Tibial artery (tissue), 4 donors: ENCODE measurements at regions of chr7 and their contacts with region 1.

Region 1: DNA sequence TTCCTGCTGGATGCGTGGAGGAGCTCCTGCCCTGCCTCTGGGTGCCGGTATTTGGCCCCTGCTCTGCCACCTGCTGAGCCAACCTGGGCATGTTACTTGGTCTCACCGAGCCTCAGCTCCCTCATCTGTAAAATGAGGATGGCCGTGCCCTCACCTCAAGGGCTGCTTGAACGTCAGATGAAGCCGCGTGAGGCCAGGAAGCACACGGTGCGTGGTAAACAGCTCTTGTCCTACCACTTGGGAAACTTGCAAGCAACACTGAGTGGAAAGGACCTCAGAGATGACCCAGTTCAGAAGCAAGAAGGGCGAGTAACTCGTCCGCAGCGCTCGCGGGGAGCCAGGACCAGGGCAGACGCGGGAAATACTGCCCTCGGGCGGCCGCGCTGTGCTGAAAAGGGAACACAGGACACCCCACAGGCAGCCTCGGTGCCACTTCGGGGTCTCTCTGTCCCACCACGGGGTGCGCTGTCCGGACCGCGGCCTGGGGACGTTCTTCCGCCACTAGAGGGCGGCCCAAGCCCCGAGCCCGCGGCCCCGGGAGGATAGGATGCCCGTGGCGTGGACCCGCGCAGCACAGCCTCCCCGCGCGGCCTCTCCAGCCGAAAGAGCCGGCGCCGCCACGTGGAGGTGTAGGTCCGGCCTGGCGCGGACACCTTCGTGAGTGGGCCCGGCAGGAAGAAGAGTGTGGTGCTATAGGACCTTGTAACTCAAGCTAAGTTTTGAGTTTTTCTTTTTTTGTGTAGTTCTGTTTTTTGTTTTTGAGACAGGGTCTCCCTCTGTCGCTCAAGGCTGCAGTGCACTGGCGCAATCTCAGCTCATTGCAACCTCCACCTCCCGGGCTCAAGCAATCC is 94.1 kb downstream of the PRKAG2 start:
- DNase-seq: peak; percentile 75 to 79
- H3K4me3 ChIP-seq: peak overlapping the region; percentile 19 to 42
- H3K27ac ChIP-seq: no peak overlapping the region
- H3K4me1 ChIP-seq: peaks cover 0 to 12% (median 6%) of the 10 kb centered on the region in 4 donors
- H3K27me3 ChIP-seq: no peaks in the 10 kb centered on the region
- CTCF ChIP-seq: peak; percentile 77 to 89

Region 2: GRCh38 chr7:151876899-151877777 is 94.3 kb after region 1 on chr7 and contains the start of gene PRKAG2:
- intact Hi-C with region 1: loop called (anchors 10 kb)
- DNase-seq: peak; percentile 80 to 86
- H3K4me3 ChIP-seq: peak within 1 kb of the TSS; percentile 79 to 88
- H3K27ac ChIP-seq: peak within 1 kb of the TSS; percentile 87 to 94
- H3K4me1 ChIP-seq: peaks cover 0 to 25% (median 18%) of the 10 kb centered on the region in 4 donors
- H3K27me3 ChIP-seq: no peaks in the 10 kb centered on the region
- CTCF ChIP-seq: no peak

Region 3: DNA sequence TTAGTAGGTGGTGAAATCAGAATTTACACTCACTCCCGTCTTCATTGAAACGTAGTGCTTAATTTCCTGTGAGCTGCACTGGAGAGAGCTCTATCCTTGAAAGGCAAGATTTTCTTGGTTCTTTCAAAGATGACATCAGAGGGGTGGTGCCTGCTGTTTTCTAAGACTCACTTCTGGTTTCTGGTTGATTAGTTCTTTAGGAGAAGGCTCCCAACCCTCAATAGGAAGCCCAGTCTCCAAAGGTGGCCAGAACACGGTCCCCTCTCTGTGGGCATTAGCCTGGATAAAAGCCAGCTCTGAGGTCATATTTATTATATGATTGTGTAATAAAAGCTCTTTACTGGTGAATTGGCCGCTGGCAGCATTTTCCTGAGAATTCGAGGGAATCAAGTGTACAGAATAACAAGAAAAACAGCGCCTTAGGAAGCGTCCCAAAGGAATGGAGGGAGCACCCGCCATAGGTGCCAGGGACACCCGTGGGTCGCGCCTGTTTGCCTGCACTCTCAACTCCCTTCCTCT is 149.6 kb after region 1 on chr7:
- intact Hi-C with region 1: loop called (anchors 5 kb)
- DNase-seq: peak in 1 of 2 donors; percentile 38
- H3K4me3 ChIP-seq: no peak overlapping the region
- H3K27ac ChIP-seq: no peak overlapping the region
- H3K4me1 ChIP-seq: peaks cover 0 to 8% (median 0%) of the 10 kb centered on the region in 4 donors
- H3K27me3 ChIP-seq: peaks cover 0 to 16% of the 10 kb centered on the region in 2 donors
- CTCF ChIP-seq: no peak